HCT116 (cell line): ENCODE measurements at regions of chr3 and their contacts with region 1.

Region 1: DNA sequence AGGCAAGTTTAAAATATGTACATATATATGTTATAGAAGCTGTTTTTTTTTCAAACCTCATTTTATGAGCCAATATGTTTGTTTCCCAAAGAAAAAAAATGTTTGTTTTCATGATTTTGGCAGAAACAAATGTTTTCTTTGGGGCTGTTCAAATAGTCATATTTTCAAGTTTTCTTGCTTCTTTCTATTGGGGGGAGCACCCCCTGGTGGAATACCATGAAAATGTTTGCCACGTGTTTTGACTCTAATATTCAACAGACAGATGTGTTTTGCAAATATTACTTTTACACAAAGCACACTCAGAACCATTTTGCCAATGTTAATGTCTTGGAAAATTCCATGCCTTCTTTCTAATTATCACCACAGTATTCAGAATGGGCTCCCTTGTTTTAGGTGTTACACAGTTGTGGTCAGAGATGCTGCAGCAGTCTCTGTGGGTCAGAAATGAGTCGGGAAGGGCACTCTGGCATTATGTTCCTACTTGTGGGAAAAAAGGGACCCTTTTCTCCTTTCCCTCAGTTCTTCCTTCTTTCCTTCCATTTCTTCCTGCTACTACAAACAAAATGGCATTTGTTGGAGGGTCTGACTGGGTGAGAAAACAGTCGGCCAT is 817.0 kb downstream of the TUSC7 start:
- DNase-seq: peak; percentile 2
- ATAC-seq: no peak
- H3K4me3 ChIP-seq: no peak overlapping the region
- H3K27ac ChIP-seq: no peak overlapping the region
- H3K4me1 ChIP-seq: no peaks in the 10 kb centered on the region
- H3K27me3 ChIP-seq: no peaks in the 10 kb centered on the region
- CTCF ChIP-seq: peak; percentile 17 to 58 (median 39); a peak in 5 of 6 replicates
- POLR2A ChIP-seq: no peak
- RAD21 ChIP-seq: peak; percentile 28; the same call in 1 of the 2 replicates

Region 2: GRCh38 chr3:117019082-117019713 is 507.4 kb before region 1 on chr3:
- CTCF ChIA-PET with region 1: interaction called, 3 read pairs
- POLR2A ChIA-PET with region 1: no interaction called
- RAD21 ChIA-PET with region 1: no interaction called
- intact Hi-C with region 1: loop called (anchors 2 kb)
- DNase-seq: no peak
- ATAC-seq: peak; percentile 63
- H3K4me3 ChIP-seq: no peak overlapping the region
- H3K27ac ChIP-seq: no peak overlapping the region
- H3K4me1 ChIP-seq: no peaks in the 10 kb centered on the region
- H3K27me3 ChIP-seq: peaks cover 8% of the 10 kb centered on the region; the same call in 1 of the 2 replicates
- CTCF ChIP-seq: peak in 2 of 3 experiments; percentile 46 to 51; a peak in 3 of 6 replicates
- POLR2A ChIP-seq: no peak
- RAD21 ChIP-seq: peak; percentile 43

Region 3: GRCh38 chr3:117651246-117651645 is 124.7 kb after region 1 on chr3:
- CTCF ChIA-PET with region 1: no interaction called
- POLR2A ChIA-PET with region 1: no interaction called
- RAD21 ChIA-PET with region 1: no interaction called
- intact Hi-C with region 1: no loop called
- DNase-seq: no peak
- ATAC-seq: no peak
- H3K4me3 ChIP-seq: no peak overlapping the region
- H3K27ac ChIP-seq: no peak overlapping the region
- H3K4me1 ChIP-seq: no peaks in the 10 kb centered on the region
- H3K27me3 ChIP-seq: no peaks in the 10 kb centered on the region
- CTCF ChIP-seq: no peak
- POLR2A ChIP-seq: no peak
- RAD21 ChIP-seq: no peak